Heart left ventricle (tissue), 16 donors: ENCODE measurements at regions of chr2 and their contacts with region 1.

Region 1: GRCh38 chr2:224585205-224586088 is at the start of gene CUL3:
- DNase-seq: peak; percentile 98 to 100 (median 99)
- ATAC-seq: peak; percentile 98 to 99 (median 98)
- H3K4me3 ChIP-seq: peak within 1 kb of the TSS; percentile 60 to 95 (median 82)
- H3K27ac ChIP-seq: peak within 1 kb of the TSS; percentile 84 to 97 (median 90)
- H3K4me1 ChIP-seq: peaks cover 0 to 46% (median 22%) of the 10 kb centered on the region in 12 donors
- H3K27me3 ChIP-seq: no peaks in the 10 kb centered on the region
- CTCF ChIP-seq: no peak
- POLR2A ChIP-seq: peak in 1 of 2 donors; percentile 79
- total RNA-seq, gene CUL3: 54.6 to 82.7 (median 71.5) TPM

Region 2: GRCh38 chr2:223957092-223957851 is 628.2 kb before region 1 on chr2 and contains the start of gene MRPL44:
- intact Hi-C with region 1: loop called in 2 of 10 experiments (anchors 2 to 5 kb)
- DNase-seq: peak; percentile 96 to 99 (median 97)
- ATAC-seq: peak; percentile 100
- H3K4me3 ChIP-seq: peak within 1 kb of the TSS; percentile 54 to 98 (median 90)
- H3K27ac ChIP-seq: peak within 1 kb of the TSS; percentile 53 to 95 (median 84)
- H3K4me1 ChIP-seq: peaks cover 12 to 55% (median 44%) of the 10 kb centered on the region in 12 donors
- H3K27me3 ChIP-seq: no peaks in the 10 kb centered on the region
- CTCF ChIP-seq: peak in 3 of 12 donors; percentile 7 to 20 (median 15)
- POLR2A ChIP-seq: peak in 1 of 2 donors; percentile 73
- total RNA-seq, gene MRPL44: 33.4 to 54.2 (median 38.2) TPM

Region 3: GRCh38 chr2:224479826-224480225 is 105.6 kb before region 1 on chr2:
- intact Hi-C with region 1: loop called in 1 of 10 experiments (anchors 10 kb)
- DNase-seq: no peak
- ATAC-seq: no peak
- H3K4me3 ChIP-seq: no peak overlapping the region
- H3K27ac ChIP-seq: no peak overlapping the region
- H3K4me1 ChIP-seq: no peaks in the 10 kb centered on the region
- H3K27me3 ChIP-seq: no peaks in the 10 kb centered on the region
- CTCF ChIP-seq: no peak
- POLR2A ChIP-seq: no peak

Region 4: GRCh38 chr2:224520064-224520463 is 65.4 kb before region 1 on chr2:
- intact Hi-C with region 1: loop called in 2 of 10 experiments (anchors 10 kb)
- DNase-seq: no peak
- ATAC-seq: no peak
- H3K4me3 ChIP-seq: no peak overlapping the region
- H3K27ac ChIP-seq: no peak overlapping the region
- H3K4me1 ChIP-seq: peaks cover 0 to 78% (median 31%) of the 10 kb centered on the region in 12 donors
- H3K27me3 ChIP-seq: no peaks in the 10 kb centered on the region
- CTCF ChIP-seq: no peak
- POLR2A ChIP-seq: no peak

Region 5: DNA sequence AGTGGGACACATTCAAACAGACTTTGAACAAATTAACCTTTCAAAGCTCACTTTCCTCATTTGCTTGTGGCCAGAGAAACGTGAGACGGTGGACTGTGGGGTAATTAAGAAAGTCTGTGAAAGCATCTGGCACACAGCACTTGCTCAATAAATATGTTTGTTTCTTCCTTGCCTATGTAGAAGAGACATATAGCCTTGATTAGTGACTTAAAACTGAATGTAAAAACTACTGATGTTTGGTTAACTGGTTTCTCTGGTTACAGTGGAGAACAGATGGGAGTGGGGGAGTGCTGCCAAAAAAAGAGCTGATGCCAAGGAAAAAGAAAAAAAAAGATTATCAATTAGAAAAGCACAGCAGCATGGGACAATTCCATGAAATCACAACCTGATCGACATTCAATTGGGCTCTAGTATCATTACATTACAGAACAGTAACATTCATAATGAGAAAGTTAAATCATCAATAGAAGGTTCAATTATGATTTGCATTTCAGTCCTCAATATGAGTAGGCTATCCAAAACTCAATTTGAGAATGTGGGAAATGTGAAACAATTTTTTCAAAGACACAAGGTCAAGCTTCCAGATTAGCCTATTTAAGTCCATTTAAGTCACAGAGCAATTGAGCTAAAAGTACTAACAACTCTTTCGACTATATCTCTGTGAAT is 15.0 kb before region 1 on chr2:
- intact Hi-C with region 1: loop called in 1 of 10 experiments (anchors 2 kb)
- DNase-seq: peak in 1 of 5 donors; percentile 28
- ATAC-seq: peak in 1 of 4 donors; percentile 22
- H3K4me3 ChIP-seq: no peak overlapping the region
- H3K27ac ChIP-seq: peak overlapping the region in 2 of 12 donors; percentile 5 to 16
- H3K4me1 ChIP-seq: peaks cover 6 to 82% (median 59%) of the 10 kb centered on the region in 12 donors
- H3K27me3 ChIP-seq: no peaks in the 10 kb centered on the region
- CTCF ChIP-seq: no peak
- POLR2A ChIP-seq: no peak